CD4-positive, alpha-beta memory T cell (primary cell): ENCODE measurements at regions of chr19 and their contacts with region 1.

Region 1: DNA sequence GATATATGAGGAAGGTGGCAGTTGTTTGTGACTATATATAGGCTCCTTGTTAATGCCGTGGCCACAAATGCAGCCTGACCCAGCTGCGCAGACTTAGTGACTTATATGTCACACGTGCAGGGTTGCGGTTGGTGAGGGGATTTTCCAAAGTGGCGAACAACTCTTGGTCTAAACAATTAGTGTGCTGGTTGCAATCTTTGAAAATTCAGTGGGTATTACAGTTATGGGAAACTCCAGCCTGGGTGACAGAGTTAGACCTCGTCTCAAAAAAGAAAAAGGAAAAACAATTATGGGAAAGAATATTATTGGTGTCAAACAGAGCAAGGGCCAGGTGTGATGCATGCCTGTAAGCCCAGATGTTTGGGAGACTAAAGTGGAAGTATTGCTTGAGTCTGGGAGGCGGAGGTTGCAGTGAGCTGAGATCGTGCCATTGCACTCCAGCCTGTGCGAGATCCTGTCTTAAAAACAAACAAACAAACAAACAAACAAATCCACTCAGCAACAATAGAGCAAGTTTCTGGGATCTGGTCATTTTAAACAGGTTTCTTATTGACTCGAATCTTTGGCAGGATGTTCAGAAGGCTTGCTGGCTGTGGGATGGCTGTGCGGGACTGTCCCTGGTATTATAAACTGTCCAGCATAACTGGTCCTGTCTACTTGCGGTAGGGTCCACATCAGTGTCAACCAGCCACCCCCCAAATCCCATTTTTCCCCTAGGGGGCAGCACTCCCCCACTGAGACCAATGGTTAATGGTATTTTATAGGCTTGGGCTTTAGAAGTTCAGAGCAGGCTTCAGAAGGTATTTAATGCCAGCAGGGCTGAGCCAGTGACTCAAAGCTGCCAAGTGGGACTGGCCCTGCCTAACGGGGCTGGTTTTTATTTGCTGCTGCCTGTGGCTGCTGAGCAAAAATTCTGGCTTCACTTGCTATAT is 15.4 kb downstream of the RELB start:
- DNase-seq: peak; percentile 78 to 97 (median 81)
- H3K4me3 ChIP-seq: peak overlapping the region; percentile 6 to 7
- H3K4me3 Mint-ChIP-seq: peak overlapping the region; percentile 28 to 86 (median 69)
- H3K27ac ChIP-seq: peak overlapping the region; percentile 88
- H3K27ac Mint-ChIP-seq: peak overlapping the region; percentile 89 to 96 (median 95)
- H3K4me1 ChIP-seq: peaks cover 17% of the 10 kb centered on the region
- H3K4me1 Mint-ChIP-seq: peaks cover 8 to 24% (median 15%) of the 10 kb centered on the region in 4 donors
- H3K27me3 ChIP-seq: no peaks in the 10 kb centered on the region
- H3K27me3 Mint-ChIP-seq: no peaks in the 10 kb centered on the region

Region 2: DNA sequence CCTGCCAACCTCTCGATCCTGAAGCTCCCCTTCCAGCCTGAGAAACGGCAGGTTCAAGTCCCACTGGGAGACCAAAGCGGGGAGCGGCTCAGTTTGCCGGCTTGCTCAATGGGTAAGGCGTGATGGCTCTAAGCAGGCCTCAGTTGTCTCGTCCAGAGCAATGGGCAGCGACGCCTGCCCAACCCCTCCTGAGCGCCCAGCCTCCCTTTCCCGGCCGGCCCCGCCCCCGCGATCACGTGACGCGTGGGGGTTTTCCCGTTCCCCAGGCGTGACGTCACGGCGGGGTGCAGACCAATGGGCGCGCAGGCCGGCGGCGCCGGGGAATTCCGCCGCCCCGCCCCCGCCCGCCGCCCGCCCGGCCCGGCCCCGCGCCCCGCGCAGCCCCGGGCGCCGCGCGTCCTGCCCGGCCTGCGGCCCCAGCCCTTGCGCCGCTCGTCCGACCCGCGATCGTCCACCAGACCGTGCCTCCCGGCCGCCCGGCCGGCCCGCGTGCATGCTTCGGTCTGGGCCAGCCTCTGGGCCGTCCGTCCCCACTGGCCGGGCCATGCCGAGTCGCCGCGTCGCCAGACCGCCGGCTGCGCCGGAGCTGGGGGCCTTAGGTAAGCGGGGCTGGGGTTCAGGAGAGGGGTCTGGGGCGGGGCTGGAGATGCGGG is 15.4 kb before region 1 on chr19 and contains the start of gene RELB:
- CTCF ChIA-PET with region 1: interaction called, 3 read pairs
- POLR2A ChIA-PET with region 1: interaction called, 6 read pairs
- intact Hi-C with region 1: loop called (anchors 2 kb)
- DNase-seq: peak; percentile 93 to 97 (median 94)
- H3K4me3 ChIP-seq: peak within 1 kb of the TSS; percentile 47 to 69
- H3K4me3 Mint-ChIP-seq: peak within 1 kb of the TSS; percentile 93 to 99 (median 98)
- H3K27ac ChIP-seq: peak within 1 kb of the TSS; percentile 100
- H3K27ac Mint-ChIP-seq: peak within 1 kb of the TSS; percentile 99 to 100 (median 100)
- H3K4me1 ChIP-seq: peaks cover 13% of the 10 kb centered on the region
- H3K4me1 Mint-ChIP-seq: peaks cover 8 to 25% (median 14%) of the 10 kb centered on the region in 4 donors
- H3K27me3 ChIP-seq: no peaks in the 10 kb centered on the region
- H3K27me3 Mint-ChIP-seq: no peaks in the 10 kb centered on the region
- total RNA-seq, gene RELB: 38.8 to 39.8 TPM

Region 3: DNA sequence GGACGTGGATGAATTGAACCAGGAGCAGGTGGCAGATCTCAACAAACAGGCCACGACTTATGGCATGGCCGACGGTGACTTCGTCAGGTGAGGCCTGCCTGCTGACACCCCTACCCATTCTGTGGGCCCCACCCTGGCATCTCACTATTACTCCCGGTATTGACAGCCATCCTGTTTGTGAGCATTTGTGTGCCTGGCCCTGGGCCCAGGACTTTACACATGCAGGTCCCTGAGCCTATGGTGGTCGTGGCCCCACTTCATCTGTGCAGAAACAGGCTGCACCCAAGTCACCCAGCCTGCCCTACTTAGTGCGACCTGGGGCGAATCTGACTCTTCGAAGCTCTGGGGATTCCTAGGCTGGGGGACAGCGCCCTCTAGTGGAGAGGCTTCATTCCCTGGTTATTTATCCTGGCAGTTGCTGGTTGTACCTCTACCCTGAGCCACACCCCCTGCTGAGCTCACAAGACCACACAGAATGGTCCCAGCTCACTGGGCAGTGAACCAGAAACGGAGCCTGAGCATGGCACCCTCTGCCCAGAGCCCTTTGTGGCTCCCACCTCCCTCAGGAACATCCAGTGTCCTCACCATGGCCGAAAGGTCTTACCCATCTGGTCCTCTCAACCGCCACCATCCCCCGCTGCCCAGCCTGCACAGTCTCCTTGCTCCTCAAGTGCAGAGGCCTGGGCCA is 42.8 kb after region 1 on chr19:
- CTCF ChIA-PET with region 1: interaction called, 6 read pairs
- POLR2A ChIA-PET with region 1: no interaction called
- intact Hi-C with region 1: loop called (anchors 1 kb)
- DNase-seq: peak; percentile 76 to 84 (median 81)
- H3K4me3 ChIP-seq: no peak overlapping the region
- H3K4me3 Mint-ChIP-seq: no peak overlapping the region
- H3K27ac ChIP-seq: no peak overlapping the region
- H3K27ac Mint-ChIP-seq: peak overlapping the region in 6 of 7 donors; percentile 57 to 87 (median 82)
- H3K4me1 ChIP-seq: no peaks in the 10 kb centered on the region
- H3K4me1 Mint-ChIP-seq: peaks cover 0 to 6% (median 4%) of the 10 kb centered on the region in 4 donors
- H3K27me3 ChIP-seq: no peaks in the 10 kb centered on the region
- H3K27me3 Mint-ChIP-seq: no peaks in the 10 kb centered on the region

Region 4: GRCh38 chr19:45125926-45126493 is 109.4 kb after region 1 on chr19:
- CTCF ChIA-PET with region 1: interaction called, 3 read pairs
- POLR2A ChIA-PET with region 1: no interaction called
- intact Hi-C with region 1: loop called (anchors 1 kb)
- DNase-seq: peak; percentile 50 to 58 (median 55)
- H3K4me3 ChIP-seq: no peak overlapping the region
- H3K4me3 Mint-ChIP-seq: no peak overlapping the region
- H3K27ac ChIP-seq: no peak overlapping the region
- H3K27ac Mint-ChIP-seq: no peak overlapping the region
- H3K4me1 ChIP-seq: peaks cover 17% of the 10 kb centered on the region
- H3K4me1 Mint-ChIP-seq: peaks cover 9 to 28% (median 21%) of the 10 kb centered on the region in 4 donors
- H3K27me3 ChIP-seq: no peaks in the 10 kb centered on the region
- H3K27me3 Mint-ChIP-seq: no peaks in the 10 kb centered on the region

Region 5: DNA sequence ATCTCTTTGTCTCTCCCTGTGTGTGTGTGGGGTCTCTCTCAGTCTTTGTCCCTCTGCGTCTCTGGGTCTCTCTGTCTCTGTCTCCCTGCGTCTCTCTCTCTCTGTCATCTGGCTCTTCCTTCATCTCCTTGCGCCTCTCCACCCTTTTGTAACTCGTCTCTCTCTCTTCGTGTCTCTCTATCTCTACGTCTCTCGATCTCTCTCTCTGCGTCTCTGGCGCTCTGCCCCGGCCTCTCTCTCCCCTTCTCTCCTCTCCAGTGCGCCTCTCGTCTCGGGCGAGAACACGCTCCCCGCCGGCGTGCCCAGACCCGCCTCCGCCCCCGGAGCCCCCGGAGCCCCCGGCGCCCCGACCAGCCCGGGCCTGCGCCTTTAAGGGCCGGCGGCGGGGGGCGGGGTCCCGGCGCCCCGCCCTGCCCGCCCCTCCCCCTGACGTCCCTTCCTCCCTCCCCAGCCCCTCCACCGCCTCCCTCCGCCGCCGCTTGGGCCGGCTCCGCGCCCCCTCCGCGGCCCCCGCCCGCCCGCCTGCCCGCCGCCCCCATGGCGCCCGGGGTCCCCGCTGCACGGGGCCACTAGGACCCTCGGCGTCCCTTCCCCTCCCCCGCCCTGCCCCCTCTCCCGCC is 234.3 kb after region 1 on chr19 and contains the start of gene MARK4:
- CTCF ChIA-PET with region 1: no interaction called
- POLR2A ChIA-PET with region 1: no interaction called
- intact Hi-C with region 1: loop called (anchors 1 kb)
- DNase-seq: peak; percentile 48 to 64 (median 50)
- H3K4me3 ChIP-seq: peak within 1 kb of the TSS; percentile 57 to 66
- H3K4me3 Mint-ChIP-seq: peak within 1 kb of the TSS; percentile 89 to 99 (median 94)
- H3K27ac ChIP-seq: peak within 1 kb of the TSS; percentile 56
- H3K27ac Mint-ChIP-seq: peak within 1 kb of the TSS; percentile 65 to 96 (median 92)
- H3K4me1 ChIP-seq: peaks cover 50% of the 10 kb centered on the region
- H3K4me1 Mint-ChIP-seq: peaks cover 19 to 49% (median 31%) of the 10 kb centered on the region in 4 donors
- H3K27me3 ChIP-seq: no peaks in the 10 kb centered on the region
- H3K27me3 Mint-ChIP-seq: no peaks in the 10 kb centered on the region
- total RNA-seq, gene MARK4: 24.3 to 25.2 TPM

Region 6: DNA sequence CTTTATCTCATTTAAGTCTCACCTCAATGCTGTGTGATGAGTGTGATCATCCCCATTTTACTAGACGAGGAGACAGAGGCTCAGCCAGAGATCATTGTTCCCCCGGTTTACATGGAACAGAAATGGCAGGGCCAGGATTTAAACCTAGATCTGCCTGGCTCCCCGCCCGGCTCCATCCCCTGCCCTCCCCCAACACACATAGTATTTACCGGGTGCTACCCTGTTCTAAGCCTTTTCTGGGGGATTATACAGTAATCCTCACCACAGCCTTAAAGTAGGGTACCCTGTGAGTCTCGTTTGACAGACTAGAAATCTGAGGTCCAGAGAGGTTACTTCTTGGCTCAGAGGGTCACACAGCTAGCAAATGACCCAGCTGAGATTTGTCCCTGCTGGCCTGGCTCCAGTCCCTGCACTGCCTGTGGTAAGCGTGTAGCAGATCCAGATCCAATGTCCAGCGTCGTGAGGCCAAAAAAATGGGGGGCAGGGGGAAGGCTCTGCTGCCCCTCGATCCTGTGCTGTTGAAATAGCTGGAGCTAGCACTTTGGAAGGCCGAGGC is 320.1 kb after region 1 on chr19:
- CTCF ChIA-PET with region 1: no interaction called
- POLR2A ChIA-PET with region 1: no interaction called
- intact Hi-C with region 1: loop called (anchors 2 kb)
- DNase-seq: no peak
- H3K4me3 ChIP-seq: no peak overlapping the region
- H3K4me3 Mint-ChIP-seq: no peak overlapping the region
- H3K27ac ChIP-seq: no peak overlapping the region
- H3K27ac Mint-ChIP-seq: no peak overlapping the region
- H3K4me1 ChIP-seq: no peaks in the 10 kb centered on the region
- H3K4me1 Mint-ChIP-seq: peaks cover 2 to 6% (median 4%) of the 10 kb centered on the region in 4 donors
- H3K27me3 ChIP-seq: peaks cover 5% of the 10 kb centered on the region
- H3K27me3 Mint-ChIP-seq: peaks cover 18 to 22% of the 10 kb centered on the region in 2 donors

Region 7: DNA sequence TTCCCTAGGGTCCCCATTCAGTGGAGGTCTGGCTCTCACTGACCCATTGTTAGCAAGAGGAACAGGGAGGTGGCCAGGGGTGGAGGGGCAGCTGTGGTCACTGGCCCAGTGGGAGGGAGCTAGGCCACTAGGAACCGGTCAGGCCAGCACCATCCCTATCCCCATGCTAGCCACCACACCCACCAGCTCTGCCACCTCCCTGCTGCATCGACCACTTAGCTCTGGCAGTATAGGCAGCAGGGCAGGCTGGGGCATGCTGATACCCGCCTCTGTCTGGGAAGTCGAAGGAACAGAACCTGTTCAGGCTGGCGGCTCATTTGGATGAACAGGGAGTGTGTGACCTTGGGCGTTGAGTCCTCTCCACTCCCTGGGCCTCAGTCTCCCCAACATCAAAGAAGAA is 383.5 kb after region 1 on chr19:
- CTCF ChIA-PET with region 1: no interaction called
- POLR2A ChIA-PET with region 1: no interaction called
- intact Hi-C with region 1: no loop called
- DNase-seq: no peak
- H3K4me3 ChIP-seq: no peak overlapping the region
- H3K4me3 Mint-ChIP-seq: peak overlapping the region in 1 of 8 donors; percentile 15
- H3K27ac ChIP-seq: no peak overlapping the region
- H3K27ac Mint-ChIP-seq: no peak overlapping the region
- H3K4me1 ChIP-seq: peaks cover 26% of the 10 kb centered on the region
- H3K4me1 Mint-ChIP-seq: peaks cover 7 to 26% (median 16%) of the 10 kb centered on the region in 4 donors
- H3K27me3 ChIP-seq: peaks cover 16% of the 10 kb centered on the region
- H3K27me3 Mint-ChIP-seq: peaks cover 24 to 36% of the 10 kb centered on the region in 2 donors